ENCODE measurements at regions of chr2 and their contacts with region 1.

Region 1: DNA sequence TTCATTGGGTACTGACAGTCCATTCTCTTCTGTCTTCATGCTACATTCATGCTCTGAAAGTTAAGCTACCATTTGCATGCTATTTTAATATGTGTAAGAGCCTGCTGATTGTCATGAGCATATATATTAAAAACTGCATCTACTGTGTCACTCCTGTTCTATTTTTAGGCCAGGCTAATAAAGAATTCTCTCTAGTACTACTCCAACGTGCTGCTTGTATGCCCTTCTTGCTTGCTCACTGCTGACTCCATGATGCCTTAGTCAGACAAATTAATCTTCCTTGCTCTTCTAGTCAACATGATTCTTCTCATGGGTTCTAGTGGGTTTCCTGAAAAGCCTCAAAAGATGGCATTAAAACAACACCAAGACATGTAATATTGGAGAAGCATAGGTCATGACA is 1600.1 kb downstream of the DPP10 start:
- DNase-seq: no peak
- H3K4me3 ChIP-seq: no peak overlapping the region
- H3K27ac ChIP-seq: no peak overlapping the region
- H3K4me1 ChIP-seq: no peaks in the 10 kb centered on the region
- H3K27me3 ChIP-seq: no peaks in the 10 kb centered on the region
- CTCF ChIP-seq: no peak
- POLR2A ChIP-seq: no peak

Region 2: GRCh38 chr2:116570128-116570527 is 527.6 kb after region 1 on chr2:
- intact Hi-C with region 1: loop called (anchors 5 kb)
- DNase-seq: no peak
- H3K4me3 ChIP-seq: no peak overlapping the region
- H3K27ac ChIP-seq: no peak overlapping the region
- H3K4me1 ChIP-seq: no peaks in the 10 kb centered on the region
- H3K27me3 ChIP-seq: no peaks in the 10 kb centered on the region
- CTCF ChIP-seq: no peak
- POLR2A ChIP-seq: no peak